Activated CD4-positive, alpha-beta T cell treated with anti-CD3 and anti-CD28 coated beads for 36 hours (primary cell): ENCODE measurements at regions of chr15 and their contacts with region 1.

Region 1: GRCh38 chr15:45641374-45641781 is 6.5 kb downstream of the SQOR start:
- DNase-seq: no peak
- ATAC-seq: peak; percentile 21
- H3K4me3 Mint-ChIP-seq: no peak overlapping the region
- H3K27ac Mint-ChIP-seq: peak overlapping the region; percentile 55
- H3K4me1 Mint-ChIP-seq: peaks cover 91% of the 10 kb centered on the region
- H3K27me3 Mint-ChIP-seq: no peaks in the 10 kb centered on the region

Region 2: GRCh38 chr15:44616974-44617373 is 1024.4 kb before region 1 on chr15:
- CTCF ChIA-PET with region 1: no interaction called
- POLR2A ChIA-PET with region 1: no interaction called
- intact Hi-C with region 1: no loop called
- DNase-seq: no peak
- ATAC-seq: no peak
- H3K4me3 Mint-ChIP-seq: no peak overlapping the region
- H3K27ac Mint-ChIP-seq: no peak overlapping the region
- H3K4me1 Mint-ChIP-seq: no peaks in the 10 kb centered on the region
- H3K27me3 Mint-ChIP-seq: no peaks in the 10 kb centered on the region

Region 3: DNA sequence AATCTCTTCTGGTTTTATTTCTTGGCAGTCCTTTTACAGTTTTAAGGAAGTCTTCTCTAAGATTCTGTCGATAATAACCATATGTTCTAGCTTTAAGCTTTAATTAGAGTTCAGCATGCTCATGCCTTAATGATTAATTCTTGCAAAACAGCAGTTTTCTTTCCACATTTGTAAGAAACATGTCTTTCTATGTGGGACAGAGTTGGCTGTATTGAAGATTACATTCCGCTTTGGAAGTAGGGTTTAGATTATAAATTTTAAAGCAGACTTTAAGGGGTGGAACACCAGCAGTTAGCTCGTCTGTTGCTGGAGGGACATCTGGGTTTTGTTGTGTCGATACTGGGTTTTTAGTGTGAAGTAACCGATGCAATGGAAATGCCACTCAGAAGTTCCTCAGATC is 28.7 kb after region 1 on chr15:
- CTCF ChIA-PET with region 1: no interaction called
- POLR2A ChIA-PET with region 1: no interaction called
- intact Hi-C with region 1: no loop called
- DNase-seq: no peak
- ATAC-seq: no peak
- H3K4me3 Mint-ChIP-seq: no peak overlapping the region
- H3K27ac Mint-ChIP-seq: no peak overlapping the region
- H3K4me1 Mint-ChIP-seq: peaks cover 3% of the 10 kb centered on the region
- H3K27me3 Mint-ChIP-seq: no peaks in the 10 kb centered on the region

Region 4: DNA sequence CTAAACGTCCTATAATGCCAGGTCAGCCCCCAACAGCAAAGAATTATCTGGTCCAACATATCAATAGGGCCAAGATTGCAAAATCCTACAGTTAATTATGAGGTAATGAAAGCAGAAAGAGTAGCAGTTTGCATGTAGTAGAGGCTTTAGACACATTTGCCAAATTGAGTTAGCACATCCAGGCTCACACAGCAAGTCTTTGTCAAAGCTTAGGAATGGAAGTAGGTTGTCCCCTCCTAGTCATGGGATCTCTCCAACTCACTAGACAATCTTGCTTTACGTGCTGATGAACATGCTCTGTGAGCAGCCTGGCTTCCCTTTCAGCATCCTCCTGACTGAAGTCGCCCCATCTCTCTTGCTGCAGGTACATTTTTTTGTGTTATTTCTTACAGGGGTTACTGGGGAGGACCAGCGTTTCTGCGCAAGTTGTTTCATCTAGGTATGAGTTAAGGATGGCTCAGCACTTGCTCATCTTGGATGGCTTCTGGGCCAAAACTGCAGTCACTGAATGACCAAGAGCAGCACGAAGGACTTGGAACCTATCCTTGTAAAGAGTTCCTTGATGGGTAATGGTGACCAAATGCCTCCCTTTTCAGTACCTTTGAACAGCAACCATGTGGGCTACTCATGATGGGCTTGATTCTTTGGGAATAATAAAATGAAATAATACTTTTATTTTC is 49.3 kb after region 1 on chr15:
- CTCF ChIA-PET with region 1: no interaction called
- POLR2A ChIA-PET with region 1: no interaction called
- intact Hi-C with region 1: loop called in 1 of 2 experiments (anchors 5 kb)
- DNase-seq: no peak
- ATAC-seq: no peak
- H3K4me3 Mint-ChIP-seq: no peak overlapping the region
- H3K27ac Mint-ChIP-seq: no peak overlapping the region
- H3K4me1 Mint-ChIP-seq: no peaks in the 10 kb centered on the region
- H3K27me3 Mint-ChIP-seq: no peaks in the 10 kb centered on the region